Naive thymus-derived CD8-positive, alpha-beta T cell (primary cell): ENCODE measurements at regions of chr21 and their contacts with region 1.

Region 1: DNA sequence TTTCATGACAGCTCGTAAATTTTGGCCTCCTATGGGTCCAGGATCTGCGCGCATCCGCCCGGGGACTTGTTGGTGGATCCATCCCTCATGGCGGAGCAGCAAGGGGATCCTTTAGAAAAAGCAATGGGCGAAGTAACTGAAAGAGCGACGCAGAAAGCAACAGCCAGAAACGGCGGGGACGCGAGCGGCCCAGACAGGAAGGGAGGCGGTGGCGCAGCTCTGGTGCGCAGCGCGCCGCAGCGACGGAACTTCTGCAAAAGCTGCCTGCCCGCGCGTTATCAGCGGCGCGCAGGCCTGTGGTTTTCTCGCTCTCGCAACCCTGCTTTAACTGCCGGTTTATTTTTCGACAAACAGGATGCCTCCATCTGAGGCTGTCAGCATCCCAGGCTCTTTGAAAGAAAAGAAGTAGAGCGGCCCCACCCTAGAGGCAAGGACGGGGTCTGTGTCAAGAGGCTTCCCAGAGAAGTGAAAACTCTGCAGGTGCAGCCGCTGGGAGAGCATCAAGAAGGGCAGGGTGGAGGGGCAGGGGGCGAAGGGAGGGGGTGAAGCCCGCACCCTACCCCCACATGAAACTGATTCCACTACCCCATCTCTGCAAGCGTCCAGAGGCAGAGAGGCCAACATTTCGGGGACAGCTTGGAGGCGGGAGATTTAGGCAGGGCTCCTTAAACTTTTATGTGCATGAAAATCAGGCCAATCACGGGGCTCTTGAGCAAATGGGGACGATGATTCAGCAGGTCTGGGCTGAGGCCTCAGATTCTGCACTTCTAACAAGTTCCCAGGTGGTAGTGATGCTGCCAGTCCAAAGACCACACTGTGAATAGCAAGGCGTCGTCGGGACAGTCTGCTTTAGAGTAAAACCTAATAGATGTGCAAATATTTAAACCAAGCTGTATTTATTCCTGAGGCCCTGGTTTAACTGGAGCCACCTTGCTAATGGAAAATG is 22.2 kb downstream of the RUNX1 start:
- DNase-seq: peak; percentile 72 to 93 (median 85)
- ATAC-seq: peak; percentile 89 to 93
- H3K4me3 Mint-ChIP-seq: peak overlapping the region; percentile 75 to 95 (median 91)
- H3K27ac Mint-ChIP-seq: peak overlapping the region; percentile 97 to 100 (median 99)
- H3K4me1 Mint-ChIP-seq: peaks cover 50 to 94% (median 92%) of the 10 kb centered on the region in 4 donors
- H3K27me3 Mint-ChIP-seq: no peaks in the 10 kb centered on the region

Region 2: DNA sequence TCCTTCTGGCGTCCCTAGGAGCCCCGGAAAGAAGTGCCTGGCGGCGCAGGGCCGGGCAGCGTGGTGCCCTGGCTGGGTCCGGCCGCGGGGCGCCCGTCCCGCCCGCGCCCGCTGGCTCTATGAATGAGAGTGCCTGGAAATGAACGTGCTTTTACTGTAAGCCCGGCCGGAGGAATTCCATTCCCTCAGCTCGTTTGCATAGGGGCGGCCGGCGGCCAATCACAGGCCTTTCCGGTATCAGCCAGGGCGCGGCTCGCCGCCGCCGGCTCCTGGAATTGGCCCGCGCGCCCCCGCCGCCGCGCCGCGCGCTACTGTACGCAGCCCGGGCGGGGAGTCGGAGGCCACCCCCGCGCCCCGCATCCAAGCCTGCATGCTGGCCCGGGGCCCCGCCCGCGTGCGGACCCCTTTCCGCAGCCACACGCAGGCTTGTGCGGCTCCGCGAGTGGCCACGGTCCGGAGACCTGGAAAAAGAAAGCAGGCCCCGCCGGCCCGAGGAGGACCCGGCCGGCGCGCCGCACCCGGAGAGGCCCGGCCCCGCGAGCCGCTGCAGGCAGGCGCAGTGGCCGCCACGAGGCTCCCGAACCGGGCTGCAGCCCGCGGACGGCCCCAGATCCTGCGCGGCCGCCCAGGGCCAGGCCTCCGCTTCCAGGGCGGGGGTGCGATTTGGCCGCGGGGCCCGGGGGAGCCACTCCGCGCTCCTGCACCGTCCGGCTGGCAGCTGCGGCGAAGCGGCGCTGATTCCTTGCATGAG is 138.1 kb before region 1 on chr21:
- POLR2A ChIA-PET with region 1: interaction called, 23 read pairs
- DNase-seq: peak; percentile 51 to 83 (median 64)
- ATAC-seq: peak; percentile 42 to 48
- H3K4me3 Mint-ChIP-seq: peak overlapping the region; percentile 91 to 99 (median 95)
- H3K27ac Mint-ChIP-seq: peak overlapping the region in 9 of 10 donors; percentile 92 to 99 (median 95)
- H3K4me1 Mint-ChIP-seq: peaks cover 12 to 63% (median 32%) of the 10 kb centered on the region in 4 donors
- H3K27me3 Mint-ChIP-seq: no peaks in the 10 kb centered on the region

Region 3: GRCh38 chr21:34908419-34909055 is 118.4 kb before region 1 on chr21:
- POLR2A ChIA-PET with region 1: no interaction called
- DNase-seq: no peak
- ATAC-seq: no peak
- H3K4me3 Mint-ChIP-seq: peak overlapping the region in 2 of 10 donors; percentile 11 to 16
- H3K27ac Mint-ChIP-seq: peak overlapping the region in 3 of 10 donors; percentile 3 to 47 (median 5)
- H3K4me1 Mint-ChIP-seq: peaks cover 45 to 87% (median 82%) of the 10 kb centered on the region in 4 donors
- H3K27me3 Mint-ChIP-seq: no peaks in the 10 kb centered on the region

Region 4: DNA sequence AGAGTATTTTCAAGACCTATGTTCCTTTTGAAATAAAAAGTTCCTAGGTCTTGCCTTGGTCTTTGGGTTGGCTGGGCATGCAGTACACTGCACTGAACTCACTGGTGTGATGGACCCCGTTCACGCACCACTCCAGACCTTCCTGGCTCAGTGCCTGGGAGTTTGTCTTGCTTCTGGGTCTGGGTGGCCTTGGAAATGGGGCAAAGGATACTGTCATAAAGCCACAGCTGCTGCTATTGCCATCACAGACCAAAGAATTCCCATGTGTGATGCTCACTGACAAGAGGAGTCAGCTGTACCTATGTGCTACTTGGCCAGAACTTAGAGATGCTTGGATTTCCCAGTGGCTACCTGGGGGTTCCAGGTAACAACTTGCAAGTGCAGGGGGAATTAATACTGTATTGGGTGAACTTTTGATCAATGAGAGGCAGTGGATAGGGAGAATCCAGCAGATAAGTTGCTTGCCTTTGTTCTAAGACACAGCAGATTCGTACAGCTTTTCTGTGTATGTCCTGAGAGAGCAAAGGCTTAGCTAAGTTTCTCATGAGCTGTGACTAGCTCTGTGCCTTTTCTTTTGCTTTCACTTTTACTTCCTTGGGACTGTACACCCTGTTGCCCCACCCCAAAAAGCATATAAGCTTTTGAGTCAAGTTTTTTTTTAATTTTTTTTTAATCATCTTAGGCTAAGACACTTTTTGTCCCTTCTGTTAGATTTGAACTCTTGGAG is 93.1 kb before region 1 on chr21:
- POLR2A ChIA-PET with region 1: interaction called, 13 read pairs
- DNase-seq: peak in 9 of 10 donors; percentile 7 to 70 (median 52)
- ATAC-seq: peak; percentile 89 to 93
- H3K4me3 Mint-ChIP-seq: peak overlapping the region; percentile 39 to 89 (median 81)
- H3K27ac Mint-ChIP-seq: peak overlapping the region; percentile 90 to 99 (median 96)
- H3K4me1 Mint-ChIP-seq: peaks cover 42 to 87% (median 80%) of the 10 kb centered on the region in 4 donors
- H3K27me3 Mint-ChIP-seq: no peaks in the 10 kb centered on the region

Region 5: GRCh38 chr21:34967509-34968289 is 59.2 kb before region 1 on chr21:
- POLR2A ChIA-PET with region 1: no interaction called
- DNase-seq: no peak
- ATAC-seq: no peak
- H3K4me3 Mint-ChIP-seq: peak overlapping the region in 7 of 10 donors; percentile 12 to 77 (median 57)
- H3K27ac Mint-ChIP-seq: peak overlapping the region in 9 of 10 donors; percentile 22 to 94 (median 82)
- H3K4me1 Mint-ChIP-seq: peaks cover 53 to 95% (median 90%) of the 10 kb centered on the region in 4 donors
- H3K27me3 Mint-ChIP-seq: no peaks in the 10 kb centered on the region

Region 6: GRCh38 chr21:35057428-35057827 is 30.5 kb after region 1 on chr21:
- POLR2A ChIA-PET with region 1: no interaction called
- DNase-seq: no peak
- ATAC-seq: no peak
- H3K4me3 Mint-ChIP-seq: peak overlapping the region in 1 of 10 donors; percentile 8
- H3K27ac Mint-ChIP-seq: peak overlapping the region in 1 of 10 donors; percentile 27
- H3K4me1 Mint-ChIP-seq: peaks cover 9 to 26% (median 11%) of the 10 kb centered on the region in 4 donors
- H3K27me3 Mint-ChIP-seq: peaks cover 0 to 4% (median 0%) of the 10 kb centered on the region in 5 donors